GM12878 (cell line): ENCODE measurements at regions of chr1 and their contacts with region 1.

Region 1: DNA sequence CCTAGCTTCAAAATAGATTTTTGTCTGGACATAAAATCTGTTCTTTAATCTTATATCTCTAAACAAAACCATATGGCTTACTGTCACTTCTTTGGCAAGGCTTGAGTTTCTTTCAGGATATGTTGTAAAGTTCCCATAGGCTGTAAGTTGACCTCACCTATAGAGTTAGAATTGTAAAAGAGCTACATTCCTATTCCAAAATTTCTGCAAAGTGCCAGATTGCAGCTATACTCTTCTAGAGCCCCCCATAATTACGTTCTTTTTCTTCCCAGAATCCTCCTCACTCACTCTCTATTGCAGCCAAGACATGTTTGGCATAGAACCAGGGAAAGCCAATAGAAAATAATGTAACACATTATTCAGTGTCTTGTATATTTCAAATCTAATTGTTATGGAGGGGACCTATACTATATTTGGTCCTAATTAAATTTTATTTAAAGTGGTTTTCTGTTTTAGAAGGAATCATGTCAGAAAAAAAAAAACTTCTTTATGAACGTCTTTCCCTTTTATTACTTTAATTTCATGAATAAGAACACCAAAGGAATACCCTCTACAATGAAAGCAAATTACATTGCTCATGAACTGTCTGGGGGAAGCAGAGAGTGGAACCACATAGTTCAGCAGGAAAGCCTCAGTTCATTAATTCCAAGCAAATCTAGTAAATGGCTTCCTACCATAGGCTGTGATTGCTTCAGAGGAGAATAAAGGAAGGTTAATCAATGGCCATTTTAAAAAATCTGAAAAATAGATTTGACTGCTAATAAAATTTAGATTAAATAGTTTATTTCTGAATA is 22.3 kb downstream of the CTTNBP2NL start:
- DNase-seq: no peak
- ATAC-seq: no peak
- H3K4me3 ChIP-seq: no peak overlapping the region
- H3K27ac ChIP-seq: no peak overlapping the region
- H3K4me1 ChIP-seq: no peaks in the 10 kb centered on the region
- H3K27me3 ChIP-seq: no peaks in the 10 kb centered on the region
- CTCF ChIP-seq: no peak
- EP300 ChIP-seq: no peak
- POLR2A ChIP-seq: no peak
- RAD21 ChIP-seq: no peak

Region 2: DNA sequence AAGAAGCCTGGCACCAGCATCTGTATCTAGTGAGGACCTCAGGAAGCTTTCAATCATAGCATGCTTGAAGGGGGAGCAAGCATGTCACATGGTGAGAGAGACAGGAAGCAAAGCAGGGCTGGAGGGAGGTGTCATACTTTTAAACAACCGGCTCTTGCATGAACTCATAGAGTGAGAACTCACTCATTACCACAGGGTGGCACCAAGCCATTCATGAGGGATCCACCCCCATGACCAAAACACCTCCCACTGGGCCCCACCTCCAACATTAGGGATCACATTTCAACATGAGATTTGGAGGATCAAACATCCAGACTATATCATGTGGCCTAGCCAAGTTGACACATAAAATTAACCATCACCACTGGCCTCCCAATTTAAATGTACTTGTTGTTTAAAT is 303.8 kb before region 1 on chr1:
- CTCF ChIA-PET with region 1: no interaction called
- POLR2A ChIA-PET with region 1: no interaction called
- RAD21 ChIA-PET with region 1: no interaction called
- SMC1A ChIA-PET with region 1: no interaction called
- in situ Hi-C with region 1: no loop called
- intact Hi-C with region 1: no loop called
- DNase-seq: no peak
- ATAC-seq: no peak
- H3K4me3 ChIP-seq: no peak overlapping the region
- H3K27ac ChIP-seq: no peak overlapping the region
- H3K4me1 ChIP-seq: no peaks in the 10 kb centered on the region
- H3K27me3 ChIP-seq: no peaks in the 10 kb centered on the region
- CTCF ChIP-seq: no peak
- EP300 ChIP-seq: no peak
- POLR2A ChIP-seq: no peak
- RAD21 ChIP-seq: no peak

Region 3: DNA sequence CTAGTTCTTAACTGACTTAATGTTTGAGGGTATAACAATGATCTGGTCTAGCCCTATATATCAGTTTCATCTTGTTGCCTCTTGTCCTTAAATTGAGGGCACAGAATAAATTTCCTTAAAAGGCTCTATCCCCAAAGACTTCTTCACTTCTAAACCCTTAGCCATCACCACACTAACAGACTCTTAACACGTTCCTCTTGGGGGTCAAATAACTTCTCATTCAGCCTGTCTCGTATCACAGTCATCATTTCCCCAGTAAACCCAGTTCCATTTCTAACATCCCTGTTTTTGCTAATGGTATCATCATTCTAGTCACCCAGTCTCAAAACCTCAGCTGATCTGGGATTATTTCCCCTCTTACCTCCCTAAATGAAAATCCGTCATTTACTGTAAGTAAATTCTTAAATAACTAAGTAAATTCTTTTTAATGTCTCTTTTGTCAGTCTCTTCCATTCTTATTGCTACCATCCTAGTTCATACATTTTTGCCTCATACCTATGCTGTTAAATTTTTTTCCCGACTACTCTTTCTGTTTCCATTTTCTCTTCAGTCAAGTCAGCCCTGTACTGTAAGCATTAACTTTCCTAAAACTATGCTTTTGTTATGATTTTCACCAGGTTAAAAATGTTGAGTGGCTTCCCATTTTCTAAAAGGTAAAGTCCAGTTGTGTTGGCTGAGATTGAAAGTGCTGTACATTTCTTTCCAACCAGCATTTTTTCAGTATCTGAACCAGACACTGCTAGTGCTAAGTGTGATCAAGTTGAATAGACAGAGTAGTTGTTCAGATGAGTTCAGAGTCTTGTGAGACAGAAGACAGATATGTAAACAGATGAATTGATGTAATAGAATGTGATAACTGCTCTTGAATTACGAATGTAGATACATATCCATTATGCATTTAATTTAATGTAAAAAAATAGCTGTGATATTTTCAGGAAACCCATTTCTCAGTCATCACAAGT is 15.3 kb before region 1 on chr1:
- CTCF ChIA-PET with region 1: no interaction called
- POLR2A ChIA-PET with region 1: interaction called, 10 read pairs
- RAD21 ChIA-PET with region 1: no interaction called
- SMC1A ChIA-PET with region 1: interaction called, 3 read pairs
- in situ Hi-C with region 1: no loop called
- intact Hi-C with region 1: no loop called
- DNase-seq: no peak
- ATAC-seq: peak; percentile 64
- H3K4me3 ChIP-seq: peak overlapping the region; percentile 38; the same call in 1 of the 2 replicates
- H3K27ac ChIP-seq: peak overlapping the region; percentile 41
- H3K4me1 ChIP-seq: peaks cover 7% of the 10 kb centered on the region
- H3K27me3 ChIP-seq: no peaks in the 10 kb centered on the region
- CTCF ChIP-seq: no peak
- EP300 ChIP-seq: no peak
- POLR2A ChIP-seq: no peak
- RAD21 ChIP-seq: no peak

Region 4: GRCh38 chr1:112508278-112509004 is 90.1 kb after region 1 on chr1 and contains the start of gene WNT2B:
- CTCF ChIA-PET with region 1: no interaction called
- POLR2A ChIA-PET with region 1: no interaction called
- RAD21 ChIA-PET with region 1: no interaction called
- SMC1A ChIA-PET with region 1: no interaction called
- in situ Hi-C with region 1: no loop called
- intact Hi-C with region 1: no loop called
- DNase-seq: no peak
- ATAC-seq: peak; percentile 88
- H3K4me3 ChIP-seq: peak within 1 kb of the TSS; percentile 67
- H3K27ac ChIP-seq: no peak within 1 kb of the TSS
- H3K4me1 ChIP-seq: peaks cover 8% of the 10 kb centered on the region; the same call in 1 of the 2 replicates
- H3K27me3 ChIP-seq: peaks cover 2 to 10% of the 10 kb centered on the region in 2 experiments
- CTCF ChIP-seq: no peak
- EP300 ChIP-seq: no peak
- POLR2A ChIP-seq: no peak
- RAD21 ChIP-seq: no peak
- polyA plus RNA-seq, gene WNT2B: 0.02 to 0.08 TPM

Region 5: GRCh38 chr1:112637254-112638116 is 219.2 kb after region 1 on chr1:
- CTCF ChIA-PET with region 1: no interaction called
- POLR2A ChIA-PET with region 1: no interaction called
- RAD21 ChIA-PET with region 1: no interaction called
- SMC1A ChIA-PET with region 1: no interaction called
- in situ Hi-C with region 1: no loop called
- intact Hi-C with region 1: no loop called
- DNase-seq: no peak
- ATAC-seq: no peak
- H3K4me3 ChIP-seq: no peak overlapping the region
- H3K27ac ChIP-seq: peak overlapping the region; percentile 48; the same call in 1 of the 2 replicates
- H3K4me1 ChIP-seq: peaks cover 27% of the 10 kb centered on the region
- H3K27me3 ChIP-seq: no peaks in the 10 kb centered on the region
- CTCF ChIP-seq: no peak
- EP300 ChIP-seq: no peak
- POLR2A ChIP-seq: no peak
- RAD21 ChIP-seq: no peak